Heart right ventricle (tissue), 16 donors: ENCODE measurements at regions of chr2 and their contacts with region 1.

Region 1: GRCh38 chr2:70124983-70125480 is 37.8 kb downstream of the PCBP1 start:
- DNase-seq: peak; percentile 66 to 70
- ATAC-seq: peak; percentile 41 to 74 (median 66)
- H3K4me3 ChIP-seq: peak overlapping the region; percentile 33 to 82 (median 66)
- H3K27ac ChIP-seq: peak overlapping the region; percentile 92 to 100 (median 99)
- H3K4me1 ChIP-seq: peaks cover 9 to 64% (median 39%) of the 10 kb centered on the region in 9 donors
- H3K27me3 ChIP-seq: no peaks in the 10 kb centered on the region
- CTCF ChIP-seq: no peak

Region 2: GRCh38 chr2:69683101-69683971 is 441.7 kb before region 1 on chr2:
- intact Hi-C with region 1: no loop called
- DNase-seq: peak in 1 of 2 donors; percentile 82
- ATAC-seq: peak; percentile 81 to 96 (median 92)
- H3K4me3 ChIP-seq: peak overlapping the region in 4 of 10 donors; percentile 1 to 19 (median 12)
- H3K27ac ChIP-seq: peak overlapping the region; percentile 50 to 82 (median 70)
- H3K4me1 ChIP-seq: peaks cover 2 to 55% (median 19%) of the 10 kb centered on the region in 9 donors
- H3K27me3 ChIP-seq: no peaks in the 10 kb centered on the region
- CTCF ChIP-seq: no peak

Region 3: GRCh38 chr2:70094978-70095719 is 29.9 kb before region 1 on chr2:
- intact Hi-C with region 1: loop called in 1 of 10 experiments (anchors 2 kb)
- DNase-seq: peak in 1 of 2 donors; percentile 70
- ATAC-seq: peak; percentile 75 to 89 (median 83)
- H3K4me3 ChIP-seq: peak overlapping the region in 4 of 10 donors; percentile 1 to 24 (median 15)
- H3K27ac ChIP-seq: peak overlapping the region; percentile 10 to 96 (median 84)
- H3K4me1 ChIP-seq: peaks cover 0 to 51% (median 22%) of the 10 kb centered on the region in 9 donors
- H3K27me3 ChIP-seq: no peaks in the 10 kb centered on the region
- CTCF ChIP-seq: no peak

Region 4: GRCh38 chr2:70161069-70161534 is 36.1 kb after region 1 on chr2:
- intact Hi-C with region 1: no loop called
- DNase-seq: no peak
- ATAC-seq: no peak
- H3K4me3 ChIP-seq: no peak overlapping the region
- H3K27ac ChIP-seq: no peak overlapping the region
- H3K4me1 ChIP-seq: no peaks in the 10 kb centered on the region
- H3K27me3 ChIP-seq: no peaks in the 10 kb centered on the region
- CTCF ChIP-seq: no peak